Activated B cell treated with CpG ODN at 0.5 μM for 24 hours (primary cell): ENCODE measurements at regions of chr14 and their contacts with region 1.

Region 1: GRCh38 chr14:50099335-50099734 is 17.0 kb downstream of the VCPKMT start:
- DNase-seq: no peak
- ATAC-seq: no peak
- H3K4me3 Mint-ChIP-seq: no peak overlapping the region
- H3K27ac Mint-ChIP-seq: peak overlapping the region; percentile 62
- H3K4me1 Mint-ChIP-seq: peaks cover 74% of the 10 kb centered on the region
- H3K27me3 Mint-ChIP-seq: no peaks in the 10 kb centered on the region
- CTCF ChIP-seq: no peak

Region 2: DNA sequence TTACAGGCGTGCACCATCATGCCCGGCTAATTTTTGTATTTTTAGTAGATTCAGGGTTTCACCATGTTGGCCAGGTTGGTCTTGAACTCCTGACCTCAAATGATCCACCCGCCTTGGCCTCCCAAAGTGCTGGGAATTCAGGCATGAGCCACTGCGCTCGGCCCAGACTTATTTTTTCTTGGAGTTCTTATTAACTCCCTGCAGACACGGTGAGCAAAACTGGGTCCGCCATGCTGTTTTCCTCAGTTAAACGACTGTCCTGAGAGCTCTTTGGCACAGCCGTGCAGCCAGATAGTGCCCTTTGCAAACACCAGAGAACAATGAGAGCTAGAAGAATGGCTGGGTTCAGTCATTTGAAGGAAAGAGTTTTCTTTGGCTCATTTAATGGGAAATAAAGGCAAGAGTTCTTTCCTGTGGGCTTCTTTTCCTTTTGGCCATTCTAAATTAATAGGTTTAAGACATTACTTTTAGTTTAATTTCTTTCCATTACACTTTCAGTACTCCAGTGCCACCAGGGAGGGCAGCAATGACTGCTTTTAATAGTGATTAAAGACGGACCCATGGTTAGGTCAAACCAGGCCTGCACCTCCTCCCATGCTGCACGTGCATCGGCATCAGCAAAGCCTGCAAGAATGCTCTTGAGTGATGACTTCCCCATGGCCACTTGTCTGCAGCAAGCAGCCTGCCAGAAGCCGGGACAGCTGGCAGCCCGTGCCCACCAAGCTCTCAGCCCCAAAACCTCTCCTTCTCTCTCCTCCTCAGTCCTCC is 43.7 kb before region 1 on chr14:
- CTCF ChIA-PET with region 1: interaction called, 32 read pairs
- POLR2A ChIA-PET with region 1: interaction called, 397 read pairs
- intact Hi-C with region 1: no loop called
- DNase-seq: no peak
- ATAC-seq: peak; percentile 90
- H3K4me3 Mint-ChIP-seq: no peak overlapping the region
- H3K27ac Mint-ChIP-seq: peak overlapping the region; percentile 78
- H3K4me1 Mint-ChIP-seq: peaks cover 42% of the 10 kb centered on the region
- H3K27me3 Mint-ChIP-seq: no peaks in the 10 kb centered on the region
- CTCF ChIP-seq: no peak